CD4-positive, alpha-beta T cell (primary cell): ENCODE measurements at regions of chr19 and their contacts with region 1.

Region 1: GRCh38 chr19:6424939-6425731 is 524 bp upstream of the KHSRP start:
- DNase-seq: peak; percentile 96 to 100 (median 98)
- ATAC-seq: peak; percentile 83
- H3K4me3 ChIP-seq: peak overlapping the region; percentile 46
- H3K4me3 Mint-ChIP-seq: peak overlapping the region; percentile 90
- H3K27ac ChIP-seq: peak overlapping the region; percentile 75 to 87
- H3K27ac Mint-ChIP-seq: peak overlapping the region; percentile 81
- H3K4me1 ChIP-seq: peaks cover 48% of the 10 kb centered on the region
- H3K4me1 Mint-ChIP-seq: peaks cover 37% of the 10 kb centered on the region
- H3K27me3 ChIP-seq: no peaks in the 10 kb centered on the region
- H3K27me3 Mint-ChIP-seq: no peaks in the 10 kb centered on the region
- CTCF ChIP-seq: no peak

Region 2: DNA sequence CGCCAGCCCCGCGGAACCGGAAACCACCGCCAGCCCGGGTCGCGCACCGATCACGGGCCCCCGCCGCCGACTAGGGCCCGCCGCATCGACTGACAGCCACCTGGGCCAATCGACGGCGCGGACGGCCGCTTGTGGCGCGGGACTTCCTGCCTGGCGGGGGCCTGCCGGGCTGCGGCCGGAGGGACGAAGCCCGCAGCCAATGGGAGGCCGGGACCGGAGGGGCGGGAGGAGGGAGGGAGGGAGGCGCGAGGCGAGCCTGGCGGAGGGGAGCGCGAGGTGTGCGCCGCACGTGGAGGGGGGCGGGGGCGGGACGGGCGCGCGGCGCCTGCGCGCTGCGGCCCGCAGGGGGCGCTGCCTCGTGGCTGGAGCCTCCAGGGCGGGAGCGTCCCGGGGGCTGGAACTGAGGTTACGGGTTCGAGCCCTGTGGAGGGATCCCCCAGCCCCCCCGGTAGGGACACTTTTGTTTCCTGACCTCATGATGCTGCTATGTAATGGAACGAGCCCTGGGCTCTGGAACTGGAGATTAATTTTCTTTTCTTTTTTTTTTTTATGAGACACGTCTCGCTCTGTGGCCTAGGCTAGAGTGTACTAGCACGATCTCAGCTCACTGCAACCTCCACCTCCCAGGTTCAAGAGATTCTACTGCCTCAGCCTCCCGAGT is 145.1 kb before region 1 on chr19 and contains the start of gene MLLT1:
- CTCF ChIA-PET with region 1: no interaction called
- POLR2A ChIA-PET with region 1: no interaction called
- intact Hi-C with region 1: loop called in 1 of 2 experiments (anchors 2 kb)
- DNase-seq: peak; percentile 85 to 98 (median 94)
- ATAC-seq: peak; percentile 79
- H3K4me3 ChIP-seq: peak within 1 kb of the TSS; percentile 67
- H3K4me3 Mint-ChIP-seq: peak within 1 kb of the TSS; percentile 94
- H3K27ac ChIP-seq: peak within 1 kb of the TSS; percentile 54 to 75
- H3K27ac Mint-ChIP-seq: peak within 1 kb of the TSS; percentile 86
- H3K4me1 ChIP-seq: peaks cover 42% of the 10 kb centered on the region
- H3K4me1 Mint-ChIP-seq: peaks cover 40% of the 10 kb centered on the region
- H3K27me3 ChIP-seq: no peaks in the 10 kb centered on the region
- H3K27me3 Mint-ChIP-seq: no peaks in the 10 kb centered on the region
- CTCF ChIP-seq: peak; percentile 56
- total RNA-seq, gene MLLT1: 18.3 to 22.1 TPM

Region 3: GRCh38 chr19:6340493-6341201 is 84.5 kb before region 1 on chr19:
- CTCF ChIA-PET with region 1: no interaction called
- POLR2A ChIA-PET with region 1: no interaction called
- intact Hi-C with region 1: no loop called
- DNase-seq: no peak
- ATAC-seq: no peak
- H3K4me3 ChIP-seq: no peak overlapping the region
- H3K4me3 Mint-ChIP-seq: no peak overlapping the region
- H3K27ac ChIP-seq: no peak overlapping the region
- H3K27ac Mint-ChIP-seq: no peak overlapping the region
- H3K4me1 ChIP-seq: no peaks in the 10 kb centered on the region
- H3K4me1 Mint-ChIP-seq: no peaks in the 10 kb centered on the region
- H3K27me3 ChIP-seq: no peaks in the 10 kb centered on the region
- H3K27me3 Mint-ChIP-seq: no peaks in the 10 kb centered on the region
- CTCF ChIP-seq: no peak

Region 4: GRCh38 chr19:6393074-6393983 is 31.8 kb before region 1 on chr19 and contains the start of gene GTF2F1:
- CTCF ChIA-PET with region 1: no interaction called
- POLR2A ChIA-PET with region 1: interaction called, 27 read pairs
- intact Hi-C with region 1: loop called (anchors 1 kb)
- DNase-seq: peak; percentile 88 to 97 (median 90)
- ATAC-seq: peak; percentile 81
- H3K4me3 ChIP-seq: peak within 1 kb of the TSS; percentile 78
- H3K4me3 Mint-ChIP-seq: peak within 1 kb of the TSS; percentile 97
- H3K27ac ChIP-seq: peak within 1 kb of the TSS; percentile 89 to 98
- H3K27ac Mint-ChIP-seq: peak within 1 kb of the TSS; percentile 99
- H3K4me1 ChIP-seq: peaks cover 29% of the 10 kb centered on the region
- H3K4me1 Mint-ChIP-seq: peaks cover 29% of the 10 kb centered on the region
- H3K27me3 ChIP-seq: no peaks in the 10 kb centered on the region
- H3K27me3 Mint-ChIP-seq: no peaks in the 10 kb centered on the region
- CTCF ChIP-seq: no peak
- total RNA-seq, gene GTF2F1: 56.1 to 61.1 TPM

Region 5: GRCh38 chr19:6481541-6482342 is 56.6 kb after region 1 on chr19 and contains the start of gene DENND1C:
- CTCF ChIA-PET with region 1: no interaction called
- POLR2A ChIA-PET with region 1: interaction called, 22 read pairs
- intact Hi-C with region 1: no loop called
- DNase-seq: peak; percentile 49 to 86 (median 66)
- ATAC-seq: peak; percentile 89
- H3K4me3 ChIP-seq: peak within 1 kb of the TSS; percentile 90
- H3K4me3 Mint-ChIP-seq: peak within 1 kb of the TSS; percentile 89
- H3K27ac ChIP-seq: peak within 1 kb of the TSS; percentile 87 to 93
- H3K27ac Mint-ChIP-seq: peak within 1 kb of the TSS; percentile 98
- H3K4me1 ChIP-seq: peaks cover 45% of the 10 kb centered on the region
- H3K4me1 Mint-ChIP-seq: peaks cover 46% of the 10 kb centered on the region
- H3K27me3 ChIP-seq: no peaks in the 10 kb centered on the region
- H3K27me3 Mint-ChIP-seq: no peaks in the 10 kb centered on the region
- CTCF ChIP-seq: no peak
- total RNA-seq, gene DENND1C: 111 to 118 TPM

Region 6: GRCh38 chr19:6510618-6511017 is 85.5 kb after region 1 on chr19:
- CTCF ChIA-PET with region 1: no interaction called
- POLR2A ChIA-PET with region 1: no interaction called
- intact Hi-C with region 1: no loop called
- DNase-seq: no peak
- ATAC-seq: no peak
- H3K4me3 ChIP-seq: no peak overlapping the region
- H3K4me3 Mint-ChIP-seq: no peak overlapping the region
- H3K27ac ChIP-seq: no peak overlapping the region
- H3K27ac Mint-ChIP-seq: no peak overlapping the region
- H3K4me1 ChIP-seq: no peaks in the 10 kb centered on the region
- H3K4me1 Mint-ChIP-seq: peaks cover 4% of the 10 kb centered on the region
- H3K27me3 ChIP-seq: no peaks in the 10 kb centered on the region
- H3K27me3 Mint-ChIP-seq: no peaks in the 10 kb centered on the region
- CTCF ChIP-seq: no peak